Caco-2 (cell line): ENCODE measurements at regions of chr5 and their contacts with region 1.

Region 1: GRCh38 chr5:125214080-125214479 is 467.6 kb upstream of the ZNF608 start:
- DNase-seq: no peak
- H3K4me3 ChIP-seq: no peak overlapping the region
- H3K4me3 Mint-ChIP-seq: no peak overlapping the region
- H3K27ac Mint-ChIP-seq: no peak overlapping the region
- H3K4me1 ChIP-seq: no peaks in the 10 kb centered on the region
- H3K4me1 Mint-ChIP-seq: no peaks in the 10 kb centered on the region
- H3K27me3 ChIP-seq: no peaks in the 10 kb centered on the region
- H3K27me3 Mint-ChIP-seq: no peaks in the 10 kb centered on the region
- CTCF ChIP-seq: no peak

Region 2: GRCh38 chr5:125298260-125298659 is 84.2 kb after region 1 on chr5:
- CTCF ChIA-PET with region 1: no interaction called
- POLR2A ChIA-PET with region 1: no interaction called
- intact Hi-C with region 1: no loop called
- DNase-seq: no peak
- H3K4me3 ChIP-seq: no peak overlapping the region
- H3K4me3 Mint-ChIP-seq: no peak overlapping the region
- H3K27ac Mint-ChIP-seq: no peak overlapping the region
- H3K4me1 ChIP-seq: no peaks in the 10 kb centered on the region
- H3K4me1 Mint-ChIP-seq: peaks cover 20% of the 10 kb centered on the region
- H3K27me3 ChIP-seq: no peaks in the 10 kb centered on the region
- H3K27me3 Mint-ChIP-seq: no peaks in the 10 kb centered on the region
- CTCF ChIP-seq: no peak

Region 3: GRCh38 chr5:125372694-125373631 is 158.9 kb after region 1 on chr5:
- CTCF ChIA-PET with region 1: interaction called, 10 read pairs
- POLR2A ChIA-PET with region 1: no interaction called
- intact Hi-C with region 1: no loop called
- DNase-seq: no peak
- H3K4me3 ChIP-seq: no peak overlapping the region
- H3K4me3 Mint-ChIP-seq: no peak overlapping the region
- H3K27ac Mint-ChIP-seq: no peak overlapping the region
- H3K4me1 ChIP-seq: no peaks in the 10 kb centered on the region
- H3K4me1 Mint-ChIP-seq: no peaks in the 10 kb centered on the region
- H3K27me3 ChIP-seq: no peaks in the 10 kb centered on the region
- H3K27me3 Mint-ChIP-seq: no peaks in the 10 kb centered on the region
- CTCF ChIP-seq: no peak